Left lung (tissue), 14 donors: ENCODE measurements at regions of chr1 and their contacts with region 1.

Region 1: GRCh38 chr1:67853704-67854103 is 20.4 kb upstream of the GNG12 start:
- DNase-seq: peak in 3 of 4 donors; percentile 50 to 76 (median 56)
- ATAC-seq: peak; percentile 87
- H3K4me3 ChIP-seq: no peak overlapping the region
- H3K27ac ChIP-seq: no peak overlapping the region
- H3K4me1 ChIP-seq: peaks cover 0 to 11% of the 10 kb centered on the region in 2 donors
- H3K27me3 ChIP-seq: no peaks in the 10 kb centered on the region
- CTCF ChIP-seq: peak; percentile 67 to 83

Region 2: GRCh38 chr1:67921725-67922489 is 68.2 kb after region 1 on chr1:
- intact Hi-C with region 1: no loop called
- DNase-seq: no peak
- ATAC-seq: no peak
- H3K4me3 ChIP-seq: no peak overlapping the region
- H3K27ac ChIP-seq: no peak overlapping the region
- H3K4me1 ChIP-seq: no peaks in the 10 kb centered on the region
- H3K27me3 ChIP-seq: no peaks in the 10 kb centered on the region
- CTCF ChIP-seq: no peak

Region 3: DNA sequence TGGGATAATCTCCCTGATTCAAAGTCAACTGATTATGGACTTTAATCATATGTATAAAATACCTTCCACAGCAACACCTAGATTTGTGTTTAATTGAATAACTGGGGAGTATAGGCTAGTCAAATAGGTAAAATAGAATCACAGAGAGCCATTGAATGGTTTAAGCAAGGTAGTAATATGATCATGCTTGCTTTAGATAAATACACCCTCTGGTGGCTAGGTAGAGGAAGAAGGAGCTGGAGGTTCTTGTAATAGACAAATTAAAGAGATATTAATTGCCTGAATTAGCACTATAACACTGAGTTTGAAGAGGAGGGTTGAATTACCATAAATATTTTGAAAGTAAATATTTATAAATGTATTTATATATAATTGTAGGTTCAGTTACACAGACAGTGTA is 156.4 kb after region 1 on chr1:
- intact Hi-C with region 1: loop called in 1 of 2 experiments (anchors 5 kb)
- DNase-seq: peak in 1 of 4 donors; percentile 10
- ATAC-seq: peak; percentile 77
- H3K4me3 ChIP-seq: no peak overlapping the region
- H3K27ac ChIP-seq: no peak overlapping the region
- H3K4me1 ChIP-seq: no peaks in the 10 kb centered on the region
- H3K27me3 ChIP-seq: no peaks in the 10 kb centered on the region
- CTCF ChIP-seq: no peak

Region 4: GRCh38 chr1:68221621-68222373 is 368.1 kb after region 1 on chr1:
- intact Hi-C with region 1: no loop called
- DNase-seq: no peak
- ATAC-seq: peak; percentile 64
- H3K4me3 ChIP-seq: no peak overlapping the region
- H3K27ac ChIP-seq: no peak overlapping the region
- H3K4me1 ChIP-seq: peaks cover 0 to 5% of the 10 kb centered on the region in 2 donors
- H3K27me3 ChIP-seq: no peaks in the 10 kb centered on the region
- CTCF ChIP-seq: no peak